ENCODE measurements at regions of chr3 and their contacts with region 1.

Region 1: DNA sequence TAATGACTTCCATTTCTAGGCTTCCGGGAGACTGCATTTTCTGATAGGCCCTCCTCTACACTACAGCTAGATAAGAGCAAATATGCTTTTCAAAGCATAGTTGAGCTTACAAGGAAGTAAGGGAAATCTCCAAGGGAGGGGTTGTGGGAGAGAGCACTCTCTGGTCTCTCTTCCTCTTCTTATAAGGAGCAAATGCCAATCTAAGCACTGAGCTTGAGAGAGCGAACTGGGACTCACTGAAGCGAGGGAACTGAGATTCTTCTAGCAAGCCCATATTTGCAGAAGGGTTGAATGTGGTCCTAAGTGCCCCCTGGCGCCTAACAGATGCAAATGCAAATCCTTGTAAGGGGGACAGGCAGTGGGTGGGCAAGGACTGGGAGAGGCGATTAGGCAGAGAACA is 164.8 kb downstream of the ERC2 start:
- H3K4me3 ChIP-seq: no peak overlapping the region
- H3K27ac ChIP-seq: no peak overlapping the region
- H3K4me1 ChIP-seq: no peaks in the 10 kb centered on the region
- CTCF ChIP-seq: 0 out of 2 replicates have a peak, but pooled peaks have one; percentile 21

Region 2: GRCh38 chr3:55405436-55405835 is 898.1 kb before region 1 on chr3:
- CTCF ChIA-PET with region 1: interaction called, 12 read pairs
- POLR2A ChIA-PET with region 1: no interaction called
- H3K4me3 ChIP-seq: no peak overlapping the region
- H3K27ac ChIP-seq: no peak overlapping the region
- H3K4me1 ChIP-seq: no peaks in the 10 kb centered on the region
- CTCF ChIP-seq: no peak

Region 3: GRCh38 chr3:56290376-56290775 is 13.1 kb before region 1 on chr3:
- CTCF ChIA-PET with region 1: interaction called, 11 read pairs
- POLR2A ChIA-PET with region 1: no interaction called
- H3K4me3 ChIP-seq: no peak overlapping the region
- H3K27ac ChIP-seq: no peak overlapping the region
- H3K4me1 ChIP-seq: no peaks in the 10 kb centered on the region
- CTCF ChIP-seq: no peak

Measured in HEK293 (cell line).